ENCODE measurements at regions of chr5 and their contacts with region 1.

Region 1: GRCh38 chr5:79886925-79887655 is 104.0 kb downstream of the MTX3 start:
- DNase-seq: peak; percentile 93
- H3K4me3 ChIP-seq: peak overlapping the region; percentile 52
- H3K27ac ChIP-seq: peak overlapping the region; percentile 95
- H3K4me1 ChIP-seq: peaks cover 81% of the 10 kb centered on the region
- CTCF ChIP-seq: no peak

Region 2: DNA sequence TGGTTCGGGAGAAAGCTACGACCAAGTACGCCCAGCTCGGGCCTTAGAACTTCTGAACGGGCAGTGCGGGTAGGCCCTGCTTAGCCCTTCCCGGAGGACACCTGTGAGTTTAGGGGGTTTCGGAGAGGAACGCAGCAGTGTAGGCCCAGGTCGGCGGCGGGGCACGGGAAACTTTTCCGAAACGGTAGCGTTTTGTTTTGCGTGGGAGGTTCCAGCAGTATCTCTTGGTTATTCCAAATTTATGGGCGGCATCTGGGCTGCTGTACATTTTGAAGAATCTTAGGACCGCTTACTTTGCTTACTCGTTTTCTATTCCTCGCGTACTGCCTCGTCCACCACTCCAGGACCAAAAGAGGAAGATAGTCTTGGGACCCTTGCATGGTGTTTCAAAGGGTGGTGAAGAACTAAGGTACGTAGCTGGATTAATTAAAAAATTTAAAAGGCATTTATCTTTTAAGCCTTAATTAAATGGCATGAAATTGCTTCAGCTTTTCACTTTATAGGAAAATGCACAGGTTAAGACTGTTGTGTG is 274.4 kb before region 1 on chr5:
- CTCF ChIA-PET with region 1: no interaction called
- POLR2A ChIA-PET with region 1: no interaction called
- intact Hi-C with region 1: loop called (anchors 5 kb)
- DNase-seq: peak; percentile 39
- H3K4me3 ChIP-seq: peak overlapping the region; percentile 87
- H3K27ac ChIP-seq: peak overlapping the region; percentile 82
- H3K4me1 ChIP-seq: peaks cover 20% of the 10 kb centered on the region
- CTCF ChIP-seq: no peak

Region 3: GRCh38 chr5:79982136-79982535 is 95.0 kb after region 1 on chr5:
- CTCF ChIA-PET with region 1: interaction called, 3 read pairs
- POLR2A ChIA-PET with region 1: interaction called, 3 read pairs
- intact Hi-C with region 1: loop called (anchors 2 kb)
- DNase-seq: peak; percentile 50
- H3K4me3 ChIP-seq: peak overlapping the region; percentile 13
- H3K27ac ChIP-seq: peak overlapping the region; percentile 97
- H3K4me1 ChIP-seq: peaks cover 83% of the 10 kb centered on the region
- CTCF ChIP-seq: no peak

Measured in OCI-LY7 (cell line).